Activated naive CD4-positive, alpha-beta T cell treated with anti-CD3 and anti-CD28 coated beads for 36 hours (primary cell): ENCODE measurements at regions of chr16 and their contacts with region 1.

Region 1: DNA sequence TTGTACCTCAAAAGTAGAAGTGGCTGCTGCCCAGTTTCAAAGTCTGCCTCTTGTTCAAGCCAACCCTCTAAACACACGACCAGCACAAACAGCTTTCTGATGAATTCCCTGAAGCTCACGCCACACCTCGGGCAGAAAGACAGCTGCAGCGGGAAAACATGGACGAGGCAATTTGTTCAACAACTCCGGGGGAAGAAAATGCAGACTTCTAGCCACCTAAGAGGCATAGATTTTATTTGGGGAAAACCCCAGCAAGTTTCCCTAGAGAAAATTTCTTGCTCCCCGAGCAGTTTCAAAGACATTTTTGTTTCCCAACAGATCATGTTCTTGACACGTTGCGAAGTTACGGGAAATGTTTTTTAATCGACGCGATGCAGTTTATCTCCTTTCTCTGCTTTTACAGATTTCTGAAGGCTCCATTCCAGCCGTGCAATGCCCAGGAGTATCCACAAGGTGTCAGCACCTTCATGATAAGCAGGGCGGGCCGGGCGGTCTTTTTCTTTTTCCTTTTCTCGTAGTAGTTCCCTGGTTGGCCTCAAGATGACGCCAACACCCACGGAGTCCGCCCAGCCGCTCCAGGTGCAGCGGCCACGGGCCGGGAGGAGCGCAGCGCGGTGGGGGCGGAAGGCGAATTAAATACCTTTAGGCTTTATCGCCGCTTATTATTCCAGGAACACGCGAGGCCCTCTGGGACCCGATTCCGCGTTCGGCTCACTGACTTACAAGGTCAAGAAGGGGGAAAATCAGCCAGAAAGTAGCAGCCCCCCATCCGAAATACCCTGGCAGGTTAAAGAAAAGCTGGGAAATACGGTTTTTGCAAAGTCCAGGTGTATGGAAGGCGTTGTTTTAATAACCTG is 2.9 kb upstream of the FOXC2 start:
- DNase-seq: peak; percentile 95
- H3K4me3 Mint-ChIP-seq: no peak overlapping the region
- H3K27ac Mint-ChIP-seq: no peak overlapping the region
- H3K4me1 Mint-ChIP-seq: peaks cover 21% of the 10 kb centered on the region
- H3K27me3 Mint-ChIP-seq: peaks cover 55% of the 10 kb centered on the region

Region 2: GRCh38 chr16:86631441-86631840 is 67.7 kb after region 1 on chr16:
- CTCF ChIA-PET with region 1: no interaction called
- intact Hi-C with region 1: no loop called
- DNase-seq: no peak
- H3K4me3 Mint-ChIP-seq: no peak overlapping the region
- H3K27ac Mint-ChIP-seq: no peak overlapping the region
- H3K4me1 Mint-ChIP-seq: no peaks in the 10 kb centered on the region
- H3K27me3 Mint-ChIP-seq: no peaks in the 10 kb centered on the region

Region 3: GRCh38 chr16:86664533-86665318 is 101.0 kb after region 1 on chr16:
- CTCF ChIA-PET with region 1: no interaction called
- intact Hi-C with region 1: loop called (anchors 10 kb)
- DNase-seq: peak; percentile 87
- H3K4me3 Mint-ChIP-seq: no peak overlapping the region
- H3K27ac Mint-ChIP-seq: peak overlapping the region; percentile 74
- H3K4me1 Mint-ChIP-seq: peaks cover 22% of the 10 kb centered on the region
- H3K27me3 Mint-ChIP-seq: peaks cover 10% of the 10 kb centered on the region

Region 4: GRCh38 chr16:86874141-86874540 is 310.4 kb after region 1 on chr16:
- CTCF ChIA-PET with region 1: no interaction called
- intact Hi-C with region 1: loop called (anchors 1 kb)
- DNase-seq: peak; percentile 53
- H3K4me3 Mint-ChIP-seq: no peak overlapping the region
- H3K27ac Mint-ChIP-seq: no peak overlapping the region
- H3K4me1 Mint-ChIP-seq: no peaks in the 10 kb centered on the region
- H3K27me3 Mint-ChIP-seq: peaks cover 25% of the 10 kb centered on the region

Region 5: DNA sequence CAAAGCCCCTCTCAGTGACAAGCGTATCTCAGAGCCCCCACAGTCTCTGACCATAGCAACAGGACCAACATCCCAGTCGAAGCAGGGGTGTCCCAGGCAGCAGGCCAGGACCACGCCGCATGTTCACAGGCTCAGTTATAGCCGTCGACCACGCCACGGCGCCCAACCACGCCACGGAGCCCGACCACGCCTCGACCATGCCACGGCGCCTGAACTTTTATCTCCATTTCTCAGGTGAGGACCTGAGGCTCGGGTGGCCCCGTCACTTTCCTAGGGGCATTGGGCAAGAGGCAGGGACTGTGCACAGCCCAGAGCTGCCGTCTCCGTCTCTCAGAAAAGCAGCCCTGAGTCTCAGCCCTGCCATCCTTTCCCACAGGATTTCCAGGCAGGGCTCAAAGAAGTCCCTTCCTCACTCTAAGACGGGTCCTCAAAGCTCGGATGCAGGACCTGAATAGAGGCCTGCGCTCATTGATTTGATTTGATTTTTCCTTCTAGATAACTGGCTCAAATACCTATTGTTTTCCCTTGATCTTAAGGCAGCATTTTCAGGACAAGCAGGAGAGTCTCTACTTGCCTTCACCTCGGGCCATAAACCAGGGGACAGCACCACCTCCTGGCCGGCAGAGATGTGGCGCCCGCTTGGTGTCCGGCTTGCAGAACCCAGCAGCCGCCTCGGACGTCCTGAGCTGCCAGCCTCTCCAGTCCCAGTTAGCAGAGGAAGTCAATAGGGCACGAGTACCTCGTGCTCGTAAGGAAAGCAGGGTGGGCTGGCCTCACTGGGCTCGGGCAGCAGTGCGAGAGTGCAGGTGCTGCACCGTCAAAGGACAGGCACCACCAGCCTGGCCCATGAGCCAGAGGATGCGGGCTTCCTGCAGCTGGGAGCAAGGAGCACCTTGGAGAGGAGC is 714.7 kb after region 1 on chr16:
- CTCF ChIA-PET with region 1: interaction called, 3 read pairs
- intact Hi-C with region 1: loop called (anchors 5 kb)
- DNase-seq: peak; percentile 65
- H3K4me3 Mint-ChIP-seq: no peak overlapping the region
- H3K27ac Mint-ChIP-seq: no peak overlapping the region
- H3K4me1 Mint-ChIP-seq: peaks cover 7% of the 10 kb centered on the region
- H3K27me3 Mint-ChIP-seq: peaks cover 5% of the 10 kb centered on the region